ENCODE measurements at regions of chr12 and their contacts with region 1.

Region 1: GRCh38 chr12:91326058-91327027 is 143.7 kb upstream of the DCN start:
- DNase-seq: peak; percentile 82
- H3K4me3 Mint-ChIP-seq: no peak overlapping the region
- H3K27ac Mint-ChIP-seq: no peak overlapping the region
- H3K4me1 Mint-ChIP-seq: no peaks in the 10 kb centered on the region
- H3K27me3 Mint-ChIP-seq: peaks cover 3% of the 10 kb centered on the region

Region 2: GRCh38 chr12:90978117-90978770 is 348.1 kb before region 1 on chr12:
- intact Hi-C with region 1: loop called (anchors 10 kb)
- DNase-seq: no peak
- H3K4me3 Mint-ChIP-seq: no peak overlapping the region
- H3K27ac Mint-ChIP-seq: no peak overlapping the region
- H3K4me1 Mint-ChIP-seq: no peaks in the 10 kb centered on the region
- H3K27me3 Mint-ChIP-seq: peaks cover 8% of the 10 kb centered on the region

Region 3: DNA sequence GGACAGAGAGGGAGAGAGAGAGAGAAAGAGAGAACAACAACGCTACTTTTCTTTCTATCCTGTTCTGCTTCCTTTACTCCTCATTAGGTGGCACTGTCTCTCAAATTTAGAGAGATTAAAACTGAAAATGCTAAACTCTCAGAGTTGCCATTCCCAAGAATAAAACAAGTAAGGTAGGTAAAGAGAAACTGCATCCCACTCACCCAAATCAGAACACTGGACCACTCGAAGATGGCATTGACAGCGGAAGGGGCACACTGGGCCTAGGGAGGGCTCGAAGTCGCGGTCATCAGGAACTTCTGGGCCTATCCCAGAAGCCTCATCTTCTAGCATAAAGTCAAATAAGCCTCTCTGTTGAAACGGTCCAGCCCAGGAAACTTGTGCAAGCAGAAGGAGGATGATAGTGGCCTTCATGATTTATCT is 148.2 kb before region 1 on chr12:
- intact Hi-C with region 1: loop called (anchors 5 kb)
- DNase-seq: no peak
- H3K4me3 Mint-ChIP-seq: no peak overlapping the region
- H3K27ac Mint-ChIP-seq: no peak overlapping the region
- H3K4me1 Mint-ChIP-seq: peaks cover 2% of the 10 kb centered on the region
- H3K27me3 Mint-ChIP-seq: no peaks in the 10 kb centered on the region